Right cardiac atrium (tissue), 5 donors: ENCODE measurements at regions of chr1 and their contacts with region 1.

Region 1: DNA sequence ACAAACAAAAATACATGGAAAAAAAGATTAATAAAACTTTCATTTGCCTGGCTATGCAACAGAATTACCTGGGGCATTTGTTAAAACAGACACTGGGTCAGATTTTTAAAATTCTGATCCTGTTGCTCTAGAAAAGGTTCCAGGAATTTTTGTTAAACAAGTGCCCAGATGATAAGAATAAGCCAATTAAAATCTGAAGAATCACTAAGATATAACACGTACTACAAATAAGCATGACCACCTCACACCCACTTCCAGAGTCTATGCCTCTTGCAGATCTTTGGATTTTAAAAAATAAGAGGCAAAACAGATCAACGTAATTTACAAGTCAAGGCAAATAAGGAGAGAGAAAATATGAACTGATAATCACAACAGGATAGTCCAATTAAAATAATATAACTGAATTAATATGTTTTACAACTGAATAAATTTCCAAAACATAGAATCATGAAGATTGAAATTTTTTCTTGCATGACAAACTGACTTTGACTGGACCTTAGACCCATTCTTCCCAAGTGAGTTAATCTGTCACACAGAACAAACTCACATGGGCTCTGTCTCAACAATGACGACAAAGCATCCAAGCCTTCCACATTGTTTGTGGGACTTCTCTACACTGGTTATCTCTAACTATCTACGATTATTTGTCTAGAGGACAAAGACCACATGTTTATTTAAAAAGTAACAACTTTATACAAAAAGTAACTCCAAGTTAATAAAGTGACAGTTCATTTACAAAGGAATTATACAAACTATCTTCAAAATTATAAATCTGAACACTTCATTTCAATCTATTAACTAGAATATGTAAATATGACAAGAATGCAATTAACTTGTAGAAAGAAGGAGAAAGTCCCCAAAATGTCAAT is 56.9 kb downstream of the COP1 start:
- DNase-seq: no peak
- ATAC-seq: no peak
- H3K4me3 ChIP-seq: no peak overlapping the region
- H3K27ac ChIP-seq: no peak overlapping the region
- H3K4me1 ChIP-seq: no peaks in the 10 kb centered on the region
- H3K27me3 ChIP-seq: no peaks in the 10 kb centered on the region

Region 2: GRCh38 chr1:175146529-175147213 is 1003.5 kb before region 1 on chr1:
- intact Hi-C with region 1: loop called in 1 of 4 experiments (anchors 10 kb)
- DNase-seq: peak; percentile 65 to 90 (median 89)
- ATAC-seq: peak; percentile 88 to 90
- H3K4me3 ChIP-seq: no peak overlapping the region
- H3K27ac ChIP-seq: no peak overlapping the region
- H3K4me1 ChIP-seq: no peaks in the 10 kb centered on the region
- H3K27me3 ChIP-seq: no peaks in the 10 kb centered on the region